Dendritic cell treated with granulocyte-macrophage colony-stimulating factor and Interleukin-4, amounts not matched to agents 40 ng/mL and 50 ng/mL, for 4 days (primary cell): ENCODE measurements at regions of chr6 and their contacts with region 1.

Region 1: DNA sequence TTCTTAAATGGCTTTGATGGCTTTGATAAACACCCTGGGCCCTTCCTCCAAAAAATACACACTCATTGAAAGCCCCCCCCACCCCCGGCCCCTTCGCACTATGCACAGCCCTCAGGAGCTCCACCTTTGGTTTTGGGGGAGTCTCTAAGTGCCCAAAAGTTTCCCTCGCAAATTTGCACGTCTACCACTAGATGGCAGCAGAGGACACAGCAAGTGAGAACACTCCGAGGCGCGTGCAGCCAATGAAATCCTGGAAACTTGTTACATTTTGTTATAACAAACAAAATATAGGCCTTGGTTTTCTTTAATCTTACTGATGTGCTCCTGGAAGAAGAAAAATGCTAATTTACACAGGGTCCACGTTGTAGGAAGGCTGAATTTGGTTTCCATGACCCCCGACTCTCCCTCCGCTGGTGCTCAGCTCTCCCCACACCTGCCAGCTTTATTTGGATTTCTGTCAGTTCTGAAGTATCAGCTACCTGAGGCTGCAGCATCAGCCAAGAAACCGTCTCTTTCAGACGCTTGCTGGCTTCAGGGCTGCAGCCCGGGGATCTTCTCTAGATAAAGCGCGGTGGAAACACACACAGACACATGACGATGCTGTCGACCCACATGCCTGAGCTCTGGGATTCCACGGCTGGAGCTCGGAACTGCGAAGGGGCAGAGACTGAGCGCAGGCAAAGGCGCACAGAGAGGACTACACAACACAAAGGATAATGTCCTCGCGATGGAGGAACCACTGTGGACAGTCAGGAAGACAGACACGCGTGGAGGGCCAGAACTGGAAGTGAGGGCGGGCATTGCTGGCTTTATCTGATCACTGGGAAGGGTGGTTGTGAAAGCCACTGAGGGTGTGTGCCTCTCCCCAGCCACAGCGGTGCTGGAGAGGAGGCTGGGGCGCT is 148.4 kb upstream of the RPS6KA2 start:
- H3K4me3 Mint-ChIP-seq: no peak overlapping the region
- H3K27ac Mint-ChIP-seq: no peak overlapping the region
- H3K4me1 Mint-ChIP-seq: peaks cover 7% of the 10 kb centered on the region
- H3K27me3 Mint-ChIP-seq: peaks cover 18% of the 10 kb centered on the region

Region 2: DNA sequence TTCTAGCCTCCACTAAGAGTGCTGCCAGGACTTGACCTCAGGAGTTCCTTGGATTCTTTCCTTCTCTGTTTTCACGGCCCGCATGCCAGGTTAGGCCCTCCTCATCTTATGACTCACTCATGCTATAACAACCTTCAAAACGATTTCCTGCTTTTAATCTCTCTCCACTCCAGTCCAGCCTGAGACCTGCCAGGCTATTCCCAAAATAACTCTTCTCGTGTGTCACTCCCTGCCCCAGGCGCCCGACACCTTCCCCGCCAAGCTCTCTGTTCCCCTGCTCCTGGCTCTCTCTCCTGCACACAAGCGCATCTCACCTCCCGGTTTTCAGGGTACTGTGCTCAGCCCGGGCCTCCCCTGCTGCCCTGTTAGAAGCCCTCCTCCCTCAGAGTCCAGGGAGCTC is 84.2 kb before region 1 on chr6:
- intact Hi-C with region 1: no loop called
- H3K4me3 Mint-ChIP-seq: no peak overlapping the region
- H3K27ac Mint-ChIP-seq: no peak overlapping the region
- H3K4me1 Mint-ChIP-seq: peaks cover 4% of the 10 kb centered on the region
- H3K27me3 Mint-ChIP-seq: no peaks in the 10 kb centered on the region

Region 3: GRCh38 chr6:166751051-166751595 is 24.3 kb before region 1 on chr6:
- intact Hi-C with region 1: no loop called
- H3K4me3 Mint-ChIP-seq: no peak overlapping the region
- H3K27ac Mint-ChIP-seq: no peak overlapping the region
- H3K4me1 Mint-ChIP-seq: peaks cover 15% of the 10 kb centered on the region
- H3K27me3 Mint-ChIP-seq: peaks cover 14% of the 10 kb centered on the region

Region 4: DNA sequence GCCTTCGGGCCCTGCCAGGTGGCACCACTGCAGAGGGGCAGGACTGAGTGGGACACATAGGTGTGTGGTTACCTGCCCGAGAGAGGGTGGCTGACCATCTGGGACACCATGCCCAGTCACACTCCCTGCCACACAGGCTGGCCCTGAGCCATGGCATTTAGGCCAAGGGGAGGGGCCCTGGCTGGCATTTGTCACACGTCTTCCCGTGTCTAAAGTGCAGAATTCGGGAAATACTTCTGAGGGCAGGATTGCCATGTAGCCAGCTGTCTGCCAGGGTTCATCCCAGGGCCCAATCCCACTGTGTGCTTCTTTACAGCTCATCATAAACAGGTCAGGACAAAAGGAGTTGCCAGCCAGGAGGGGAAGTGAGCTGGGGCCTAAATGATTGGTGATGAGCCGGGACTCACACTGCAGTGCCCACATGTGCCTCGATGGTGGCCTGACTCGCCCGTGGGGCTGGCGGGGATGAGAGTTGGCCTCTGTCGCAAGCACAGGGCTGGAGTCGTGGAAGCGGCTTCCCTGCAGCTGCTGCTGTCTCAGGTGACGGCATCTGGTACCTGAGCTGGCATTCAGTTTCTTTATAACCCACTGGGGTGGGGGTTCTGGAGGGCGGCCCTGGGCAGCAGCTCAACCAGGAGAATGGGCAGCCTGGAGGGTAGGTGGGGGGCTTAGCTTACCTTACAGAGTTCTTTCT is 509.8 kb after region 1 on chr6:
- intact Hi-C with region 1: loop called (anchors 5 kb)
- H3K4me3 Mint-ChIP-seq: no peak overlapping the region
- H3K27ac Mint-ChIP-seq: no peak overlapping the region
- H3K4me1 Mint-ChIP-seq: no peaks in the 10 kb centered on the region
- H3K27me3 Mint-ChIP-seq: peaks cover 5% of the 10 kb centered on the region